Activated T-helper 2 cell treated with anti-CD3 and anti-CD28 coated beads, Interferon-gamma antibody, Interleukin-2, Interleukin-4, amounts not matched to agents 10 μg/mL and 5 μg/mL and 100 μg/mL, durations not matched to agents 14 hours and 24 hours and 36 hours (primary cell): ENCODE measurements at regions of chr2 and their contacts with region 1.

Region 1: DNA sequence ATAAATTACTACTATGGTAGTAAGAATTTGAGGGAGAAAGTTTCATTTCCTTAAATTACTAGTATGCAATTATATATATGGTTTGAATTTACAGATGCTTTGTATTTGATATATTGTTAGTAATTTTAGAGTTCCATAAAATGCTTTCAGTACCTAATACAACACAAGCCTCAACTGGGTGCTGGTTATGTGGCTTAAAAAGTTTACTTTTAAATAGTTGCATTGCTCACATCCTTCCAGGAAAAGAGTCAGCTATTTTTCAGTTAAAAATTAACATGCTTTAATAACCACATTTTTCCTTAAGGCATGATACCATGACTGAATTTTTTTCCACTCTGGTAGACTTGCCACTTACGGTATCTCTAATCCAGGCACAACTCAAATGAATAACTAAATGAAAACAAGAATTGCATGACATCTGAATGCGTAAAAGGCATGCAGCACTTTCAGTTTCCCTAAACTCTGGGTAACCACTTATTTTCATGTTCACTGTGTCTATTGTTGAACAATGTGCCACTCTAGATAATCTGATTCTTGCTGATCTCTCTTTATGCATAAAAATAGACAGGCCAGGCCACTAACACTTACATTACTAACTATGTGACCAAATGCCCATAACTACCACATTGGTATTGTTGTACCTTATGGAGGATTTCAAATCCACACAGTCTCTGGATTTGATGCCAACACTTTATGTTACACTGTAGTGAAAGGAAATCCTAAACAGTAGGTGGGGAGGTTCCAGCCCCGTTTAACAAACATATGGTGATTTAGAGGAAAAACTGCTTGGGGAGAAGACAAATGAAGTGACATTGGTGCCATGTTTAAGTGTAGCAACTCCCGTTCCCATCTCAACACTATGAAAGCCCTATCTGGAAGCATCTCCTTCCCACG is 35.5 kb upstream of the SLC35F5 start:
- DNase-seq: no peak
- H3K4me3 Mint-ChIP-seq: peak overlapping the region; percentile 45
- H3K27ac Mint-ChIP-seq: peak overlapping the region; percentile 98
- H3K4me1 Mint-ChIP-seq: peaks cover 24% of the 10 kb centered on the region
- H3K27me3 Mint-ChIP-seq: no peaks in the 10 kb centered on the region

Region 2: GRCh38 chr2:113692698-113693428 is 99.1 kb before region 1 on chr2:
- intact Hi-C with region 1: loop called (anchors 2 kb)
- DNase-seq: peak; percentile 38
- H3K4me3 Mint-ChIP-seq: peak overlapping the region; percentile 61
- H3K27ac Mint-ChIP-seq: peak overlapping the region; percentile 94
- H3K4me1 Mint-ChIP-seq: peaks cover 49% of the 10 kb centered on the region
- H3K27me3 Mint-ChIP-seq: no peaks in the 10 kb centered on the region